ENCODE measurements at regions of chr3 and their contacts with region 1.

Region 1: DNA sequence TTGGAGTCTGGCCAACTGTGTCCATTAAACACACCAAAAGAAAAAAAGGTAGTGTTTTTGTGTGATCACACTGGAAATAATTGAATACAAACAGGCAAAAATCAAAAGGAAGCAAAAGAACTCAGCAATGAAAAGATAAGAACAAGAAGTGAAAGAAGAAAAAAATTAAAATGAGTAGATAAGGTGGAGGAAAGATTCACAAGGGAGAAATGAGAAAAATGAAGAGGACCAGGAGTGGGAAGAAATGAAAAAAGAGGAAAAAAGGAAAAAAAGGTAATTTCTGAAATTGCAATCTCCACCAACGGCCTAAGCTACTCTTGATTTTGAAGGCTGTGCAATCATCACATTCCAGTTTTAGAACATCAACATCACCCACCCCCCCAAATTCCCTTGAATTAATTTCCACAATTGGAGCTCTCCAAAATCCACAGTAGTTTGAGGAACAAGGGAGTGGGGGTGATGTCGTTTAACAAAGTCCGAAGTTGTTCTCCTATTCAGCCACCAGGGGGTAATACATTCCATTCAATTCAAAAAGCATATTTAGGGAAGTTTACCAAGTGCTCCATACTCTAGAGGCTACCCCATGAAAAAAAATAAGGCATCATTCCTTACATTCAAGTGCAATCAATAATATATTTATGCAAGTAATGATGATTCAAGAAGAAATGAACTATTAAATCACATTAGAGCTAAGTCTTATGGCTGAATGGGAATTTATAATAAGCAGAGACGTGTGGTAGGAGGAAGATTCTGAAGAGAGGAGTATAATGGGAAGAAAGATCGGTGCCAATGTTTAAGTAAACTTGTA is 37.4 kb downstream of the ZNF860 start:
- DNase-seq: peak; percentile 52 to 68 (median 62)
- ATAC-seq: peak; percentile 95
- H3K4me3 ChIP-seq: no peak overlapping the region
- H3K27ac ChIP-seq: no peak overlapping the region
- H3K4me1 ChIP-seq: peaks cover 0 to 4% of the 10 kb centered on the region in 2 experiments; a peak in 1 of 5 replicates
- H3K27me3 ChIP-seq: no peaks in the 10 kb centered on the region
- CTCF ChIP-seq: peak; percentile 61 to 91 (median 70); a peak in 5 of 6 replicates
- EP300 ChIP-seq: no peak
- POLR2A ChIP-seq: no peak
- RAD21 ChIP-seq: peak; percentile 93

Region 2: GRCh38 chr3:32138545-32139104 is 119.7 kb after region 1 on chr3:
- CTCF ChIA-PET with region 1: interaction called, 17 read pairs
- POLR2A ChIA-PET with region 1: no interaction called
- in situ Hi-C with region 1: loop called (anchors 5 kb)
- intact Hi-C with region 1: no loop called
- DNase-seq: no peak
- ATAC-seq: no peak
- H3K4me3 ChIP-seq: no peak overlapping the region
- H3K27ac ChIP-seq: no peak overlapping the region
- H3K4me1 ChIP-seq: peaks cover 0 to 15% of the 10 kb centered on the region in 2 experiments; a peak in 3 of 5 replicates
- H3K27me3 ChIP-seq: no peaks in the 10 kb centered on the region; a peak in 1 of 5 replicates
- CTCF ChIP-seq: no peak
- EP300 ChIP-seq: no peak
- POLR2A ChIP-seq: no peak
- RAD21 ChIP-seq: no peak

Region 3: DNA sequence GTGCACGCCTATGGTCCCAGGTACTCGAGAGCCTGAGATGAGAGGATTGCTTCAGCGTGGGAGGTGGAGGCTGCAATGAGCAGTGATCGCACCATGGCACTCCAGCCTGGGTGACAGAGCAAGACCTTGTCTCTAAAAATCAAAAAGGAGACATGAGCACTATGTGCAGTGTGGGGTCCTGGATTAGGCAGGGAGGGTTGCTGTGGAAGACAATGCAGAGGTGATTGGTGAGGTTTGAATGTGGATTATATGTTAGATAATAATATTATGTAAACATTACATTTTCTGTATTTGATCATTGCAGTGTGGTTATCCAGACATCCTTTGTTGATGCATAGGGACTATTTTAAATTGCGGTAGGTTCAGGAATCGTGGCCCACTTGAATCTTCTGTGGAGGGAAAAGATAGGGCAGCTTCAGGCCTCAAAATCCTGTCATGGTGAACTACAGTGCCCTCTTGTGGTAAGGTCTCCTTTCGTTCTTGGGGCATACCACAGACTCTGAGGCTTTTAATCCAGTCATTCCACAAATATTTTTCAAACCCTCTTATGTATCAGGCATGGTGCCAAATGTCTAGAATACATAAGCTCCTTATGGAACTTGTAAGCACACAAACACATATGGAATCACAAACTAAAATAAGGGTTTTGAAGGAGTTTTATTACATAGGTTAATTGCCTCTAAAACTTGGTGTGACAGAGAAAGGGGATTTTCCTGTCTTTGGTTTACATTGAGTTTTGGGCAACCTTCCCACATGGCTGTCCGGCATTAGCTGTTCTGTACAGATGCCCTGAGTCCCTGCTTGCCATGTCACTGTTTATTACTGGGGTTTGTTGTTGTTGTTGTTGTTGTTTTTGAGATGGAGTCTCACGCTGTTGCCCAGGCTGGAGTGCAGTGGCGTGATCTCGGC is 125.1 kb after region 1 on chr3:
- CTCF ChIA-PET with region 1: interaction called, 17 read pairs
- POLR2A ChIA-PET with region 1: no interaction called
- in situ Hi-C with region 1: loop called (anchors 5 kb)
- intact Hi-C with region 1: loop called (anchors 1 kb)
- DNase-seq: peak; percentile 70 to 80 (median 74)
- ATAC-seq: peak; percentile 84
- H3K4me3 ChIP-seq: no peak overlapping the region
- H3K27ac ChIP-seq: no peak overlapping the region
- H3K4me1 ChIP-seq: peaks cover 0 to 24% of the 10 kb centered on the region in 2 experiments; a peak in 3 of 5 replicates
- H3K27me3 ChIP-seq: no peaks in the 10 kb centered on the region
- CTCF ChIP-seq: peak; percentile 74 to 92 (median 78)
- EP300 ChIP-seq: no peak
- POLR2A ChIP-seq: no peak
- RAD21 ChIP-seq: peak; percentile 82 to 88

Region 4: GRCh38 chr3:32340039-32340438 is 321.1 kb after region 1 on chr3:
- CTCF ChIA-PET with region 1: no interaction called
- POLR2A ChIA-PET with region 1: no interaction called
- in situ Hi-C with region 1: no loop called
- intact Hi-C with region 1: loop called (anchors 5 kb)
- DNase-seq: peak; percentile 43 to 58 (median 50)
- ATAC-seq: peak; percentile 93
- H3K4me3 ChIP-seq: no peak overlapping the region
- H3K27ac ChIP-seq: no peak overlapping the region
- H3K4me1 ChIP-seq: no peaks in the 10 kb centered on the region
- H3K27me3 ChIP-seq: peaks cover 7 to 12% of the 10 kb centered on the region in 2 experiments; a peak in 3 of 5 replicates
- CTCF ChIP-seq: peak; percentile 50 to 59 (median 56); a peak in 5 of 6 replicates
- EP300 ChIP-seq: no peak
- POLR2A ChIP-seq: no peak
- RAD21 ChIP-seq: peak; percentile 56 to 77

Region 5: GRCh38 chr3:32399030-32399620 is 380.2 kb after region 1 on chr3:
- CTCF ChIA-PET with region 1: no interaction called
- POLR2A ChIA-PET with region 1: no interaction called
- in situ Hi-C with region 1: no loop called
- intact Hi-C with region 1: loop called (anchors 1 kb)
- DNase-seq: peak; percentile 51 to 68 (median 58)
- ATAC-seq: peak; percentile 77
- H3K4me3 ChIP-seq: no peak overlapping the region
- H3K27ac ChIP-seq: no peak overlapping the region
- H3K4me1 ChIP-seq: peaks cover 0 to 6% of the 10 kb centered on the region in 2 experiments; a peak in 1 of 5 replicates
- H3K27me3 ChIP-seq: peaks cover 24 to 39% of the 10 kb centered on the region in 2 experiments; a peak in 4 of 5 replicates
- CTCF ChIP-seq: peak; percentile 63 to 87 (median 67); a peak in 5 of 6 replicates
- EP300 ChIP-seq: no peak
- POLR2A ChIP-seq: no peak
- RAD21 ChIP-seq: peak; percentile 28 to 63; a peak in 3 of 4 replicates